OCI-LY7 (cell line): ENCODE measurements at regions of chr11 and their contacts with region 1.

Region 1: GRCh38 chr11:73360336-73361013 is 15.7 kb upstream of the RELT start:
- DNase-seq: peak; percentile 59
- H3K4me3 ChIP-seq: no peak overlapping the region
- H3K27ac ChIP-seq: no peak overlapping the region
- H3K4me1 ChIP-seq: peaks cover 16% of the 10 kb centered on the region
- CTCF ChIP-seq: peak; percentile 83

Region 2: DNA sequence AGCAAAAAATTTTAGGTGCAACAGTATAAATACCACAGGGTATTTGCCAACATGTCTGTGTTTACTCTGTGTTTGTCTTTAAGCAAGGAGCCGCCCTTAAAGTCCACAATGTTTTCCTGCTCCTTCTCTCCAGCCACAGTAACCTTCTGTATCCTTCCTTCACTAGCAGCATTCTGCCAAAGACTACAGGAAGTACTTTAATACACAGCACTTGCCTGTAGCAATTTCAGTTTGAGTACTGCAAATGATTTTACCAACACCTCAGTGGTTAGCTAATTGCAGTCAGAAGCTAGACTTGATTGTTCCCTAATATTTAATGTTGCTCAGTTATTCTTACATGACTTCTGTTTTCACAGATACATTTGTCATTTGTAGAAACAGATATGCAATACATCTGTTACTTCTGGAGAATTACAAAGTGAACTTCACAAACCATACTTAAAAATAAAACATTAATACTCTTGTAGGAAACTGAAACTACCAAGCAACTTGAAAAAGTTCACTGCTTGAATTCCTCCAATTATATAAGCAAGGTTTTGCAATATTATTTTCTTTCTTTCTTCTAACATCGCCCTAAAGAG is 287.5 kb before region 1 on chr11:
- CTCF ChIA-PET with region 1: no interaction called
- POLR2A ChIA-PET with region 1: no interaction called
- intact Hi-C with region 1: no loop called
- DNase-seq: peak; percentile 56
- H3K4me3 ChIP-seq: peak overlapping the region; percentile 19
- H3K27ac ChIP-seq: peak overlapping the region; percentile 43
- H3K4me1 ChIP-seq: peaks cover 31% of the 10 kb centered on the region
- CTCF ChIP-seq: no peak

Region 3: DNA sequence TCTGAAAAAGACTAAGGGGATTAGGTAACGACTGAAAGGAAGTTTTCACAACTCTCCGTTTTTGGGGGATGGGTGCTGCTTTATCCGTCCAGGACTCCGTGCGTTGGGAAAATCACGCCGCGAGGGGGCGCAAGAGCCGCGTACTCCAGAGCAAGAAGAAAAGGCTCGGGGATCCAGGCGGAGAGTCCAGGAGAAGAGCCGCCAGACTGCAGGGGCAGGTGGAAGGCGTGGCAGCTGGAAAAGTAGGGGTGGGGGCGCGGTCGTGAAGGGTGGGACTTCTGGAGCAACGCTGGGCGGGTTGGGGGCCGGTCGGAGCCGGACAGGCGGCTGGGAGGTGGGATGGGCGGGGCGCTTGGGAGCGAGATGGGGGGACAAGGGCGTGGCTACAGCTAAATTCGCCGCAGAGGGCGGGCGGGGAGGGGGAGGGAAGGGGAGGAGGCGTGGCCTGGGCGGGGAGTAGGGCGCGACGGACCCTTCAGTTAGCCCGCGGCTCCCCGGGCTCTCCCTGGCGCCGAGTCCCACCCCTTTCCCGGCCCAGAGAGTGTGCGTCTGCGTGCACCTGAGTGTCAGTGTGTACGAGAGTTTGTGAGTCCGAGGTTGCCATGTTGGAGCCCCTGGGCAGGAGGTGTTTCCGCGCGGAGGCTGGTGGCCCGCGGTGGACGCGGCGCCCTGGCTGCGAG is 53.0 kb before region 1 on chr11:
- CTCF ChIA-PET with region 1: interaction called, 11 read pairs
- POLR2A ChIA-PET with region 1: no interaction called
- intact Hi-C with region 1: no loop called
- DNase-seq: peak; percentile 93
- H3K4me3 ChIP-seq: peak overlapping the region; percentile 72
- H3K27ac ChIP-seq: peak overlapping the region; percentile 16
- H3K4me1 ChIP-seq: peaks cover 14% of the 10 kb centered on the region
- CTCF ChIP-seq: peak; percentile 97

Region 4: GRCh38 chr11:73393479-73394380 is 33.3 kb after region 1 on chr11:
- CTCF ChIA-PET with region 1: no interaction called
- POLR2A ChIA-PET with region 1: no interaction called
- intact Hi-C with region 1: no loop called
- DNase-seq: peak; percentile 79
- H3K4me3 ChIP-seq: no peak overlapping the region
- H3K27ac ChIP-seq: no peak overlapping the region
- H3K4me1 ChIP-seq: peaks cover 13% of the 10 kb centered on the region
- CTCF ChIP-seq: peak; percentile 88

Region 5: DNA sequence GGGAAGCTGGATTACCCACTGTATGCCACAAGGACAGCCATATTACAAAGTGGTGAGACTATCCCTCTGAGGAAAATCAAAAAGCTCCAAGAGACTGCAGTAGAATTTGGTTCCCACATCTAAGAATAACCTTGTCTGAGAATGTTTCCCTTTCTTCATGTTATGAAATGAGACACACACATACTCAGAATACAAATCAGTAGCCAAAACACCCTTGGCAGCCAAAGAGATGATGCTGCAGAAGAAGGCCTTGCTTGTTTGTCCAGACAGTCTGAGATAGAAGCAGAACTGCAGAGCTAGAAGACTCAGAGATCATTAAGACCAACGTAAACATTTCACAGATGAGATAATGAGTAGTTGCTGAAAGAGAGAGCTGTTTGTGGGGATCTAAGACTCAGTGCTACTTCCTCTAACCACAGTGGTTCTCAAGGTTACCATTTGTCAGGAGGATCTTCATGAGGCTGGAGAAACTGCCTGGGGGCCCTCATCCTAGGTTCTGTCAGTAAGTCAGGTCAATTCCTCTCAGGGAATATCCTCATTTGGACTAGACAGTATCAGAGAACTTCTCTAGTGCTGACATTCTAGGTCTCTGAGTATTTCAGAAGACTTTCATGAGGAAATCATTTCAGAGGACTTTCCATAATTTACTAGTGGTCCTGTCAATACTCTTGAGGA is 54.6 kb after region 1 on chr11:
- CTCF ChIA-PET with region 1: no interaction called
- POLR2A ChIA-PET with region 1: no interaction called
- intact Hi-C with region 1: no loop called
- DNase-seq: no peak
- H3K4me3 ChIP-seq: no peak overlapping the region
- H3K27ac ChIP-seq: no peak overlapping the region
- H3K4me1 ChIP-seq: no peaks in the 10 kb centered on the region
- CTCF ChIP-seq: no peak